PC-9 (cell line): ENCODE measurements at regions of chr10 and their contacts with region 1.

Region 1: DNA sequence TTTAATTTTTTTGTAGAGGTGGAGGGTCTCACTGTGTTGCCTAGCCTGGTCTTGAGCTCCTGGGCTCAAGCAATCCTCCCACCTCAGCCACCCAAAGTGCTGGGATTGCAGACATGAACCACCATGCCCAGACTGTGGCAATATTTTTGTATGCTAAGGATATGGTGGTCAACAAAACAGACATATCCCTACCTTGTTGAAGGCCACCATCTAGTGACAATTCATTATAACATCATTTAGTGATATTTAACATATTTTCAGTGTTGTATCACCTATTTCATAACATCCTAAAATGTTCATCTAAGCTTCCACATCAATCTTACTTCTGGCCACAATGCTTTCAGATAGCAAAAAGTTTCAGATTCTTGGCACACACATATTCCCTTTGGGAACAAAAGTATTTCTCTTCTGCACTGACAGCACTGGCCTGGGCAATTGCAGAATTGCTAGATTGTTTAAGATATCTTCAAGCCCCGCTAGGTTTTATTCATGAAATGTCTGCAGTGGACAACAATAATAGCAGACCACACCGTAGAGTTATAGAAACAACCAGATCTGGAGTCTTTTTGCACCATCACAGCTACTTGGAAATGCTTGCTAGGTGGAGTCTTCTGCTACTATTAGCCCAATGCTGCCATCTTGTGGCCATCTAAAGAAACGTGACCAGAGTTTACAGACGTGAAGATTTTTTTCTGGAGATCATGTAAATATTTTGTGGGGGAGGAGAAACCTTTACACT is 58.4 kb downstream of the DNAJC12 start:
- DNase-seq: peak; percentile 55 to 65
- H3K4me3 ChIP-seq: no peak overlapping the region
- H3K27ac ChIP-seq: no peak overlapping the region
- H3K4me1 ChIP-seq: no peaks in the 10 kb centered on the region
- H3K27me3 ChIP-seq: no peaks in the 10 kb centered on the region
- CTCF ChIP-seq: peak; percentile 92

Region 2: DNA sequence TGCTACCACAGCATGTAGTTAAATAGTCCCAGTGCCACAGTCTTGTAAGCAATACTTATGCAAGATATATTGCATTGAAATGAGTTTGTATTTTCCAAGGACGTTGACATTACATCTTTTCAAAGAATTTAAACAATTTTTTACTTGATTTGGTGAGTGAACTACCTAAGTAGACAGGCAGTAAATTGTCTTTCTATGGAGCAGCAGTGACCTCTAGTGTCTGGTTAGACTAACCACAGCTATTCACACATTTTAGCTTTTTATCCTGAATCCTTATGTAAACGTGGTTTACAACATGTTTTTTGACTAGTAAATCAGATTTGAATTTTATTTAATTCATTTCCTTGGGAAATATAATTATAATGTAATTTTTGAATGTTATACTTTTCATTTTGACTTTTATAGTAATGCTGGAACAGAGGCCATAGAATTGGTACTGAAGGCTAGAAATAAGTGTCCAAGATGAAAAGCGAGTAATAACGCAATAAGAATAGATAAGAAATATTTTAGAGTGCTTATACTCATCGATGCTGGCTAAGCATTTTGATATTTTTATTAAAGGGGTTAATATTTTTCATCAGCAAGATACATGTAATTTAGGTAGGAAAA is 848.2 kb before region 1 on chr10:
- CTCF ChIA-PET with region 1: interaction called, 3 read pairs
- POLR2A ChIA-PET with region 1: no interaction called
- intact Hi-C with region 1: loop called (anchors 2 kb)
- DNase-seq: no peak
- H3K4me3 ChIP-seq: no peak overlapping the region
- H3K27ac ChIP-seq: no peak overlapping the region
- H3K4me1 ChIP-seq: no peaks in the 10 kb centered on the region
- H3K27me3 ChIP-seq: no peaks in the 10 kb centered on the region; the same call in 1 of the 2 replicates
- CTCF ChIP-seq: peak; percentile 92

Region 3: DNA sequence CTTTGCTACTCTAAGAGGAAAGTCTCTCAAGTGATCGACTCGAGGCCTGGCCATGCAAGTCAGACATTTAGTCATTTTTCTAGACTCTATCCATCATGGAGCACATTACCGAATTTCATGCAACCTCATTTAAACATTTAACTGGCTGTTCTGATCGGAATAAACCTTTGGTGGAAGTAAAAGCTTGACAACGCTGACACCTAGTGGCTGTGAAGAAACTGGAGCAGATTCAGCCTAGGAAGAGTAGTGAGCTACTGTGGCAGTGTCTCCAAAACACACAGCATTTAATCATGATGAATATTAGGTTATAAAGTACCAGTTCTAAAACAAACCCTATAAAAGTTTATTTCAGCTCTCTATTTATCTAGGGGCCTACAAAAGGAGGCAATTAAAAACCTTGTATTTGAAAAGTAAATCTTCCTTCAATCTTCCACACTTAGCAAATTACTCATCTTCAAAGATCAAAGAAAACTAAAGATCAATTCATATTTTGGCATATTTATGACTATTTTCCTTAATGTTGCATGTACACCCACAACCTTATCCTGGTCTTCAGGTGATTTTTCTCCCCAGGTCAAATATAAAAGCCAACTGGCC is 258.6 kb before region 1 on chr10:
- CTCF ChIA-PET with region 1: no interaction called
- POLR2A ChIA-PET with region 1: no interaction called
- intact Hi-C with region 1: loop called (anchors 10 kb)
- DNase-seq: peak; percentile 31 to 42
- H3K4me3 ChIP-seq: no peak overlapping the region
- H3K27ac ChIP-seq: no peak overlapping the region
- H3K4me1 ChIP-seq: no peaks in the 10 kb centered on the region
- H3K27me3 ChIP-seq: no peaks in the 10 kb centered on the region
- CTCF ChIP-seq: peak; percentile 87

Region 4: DNA sequence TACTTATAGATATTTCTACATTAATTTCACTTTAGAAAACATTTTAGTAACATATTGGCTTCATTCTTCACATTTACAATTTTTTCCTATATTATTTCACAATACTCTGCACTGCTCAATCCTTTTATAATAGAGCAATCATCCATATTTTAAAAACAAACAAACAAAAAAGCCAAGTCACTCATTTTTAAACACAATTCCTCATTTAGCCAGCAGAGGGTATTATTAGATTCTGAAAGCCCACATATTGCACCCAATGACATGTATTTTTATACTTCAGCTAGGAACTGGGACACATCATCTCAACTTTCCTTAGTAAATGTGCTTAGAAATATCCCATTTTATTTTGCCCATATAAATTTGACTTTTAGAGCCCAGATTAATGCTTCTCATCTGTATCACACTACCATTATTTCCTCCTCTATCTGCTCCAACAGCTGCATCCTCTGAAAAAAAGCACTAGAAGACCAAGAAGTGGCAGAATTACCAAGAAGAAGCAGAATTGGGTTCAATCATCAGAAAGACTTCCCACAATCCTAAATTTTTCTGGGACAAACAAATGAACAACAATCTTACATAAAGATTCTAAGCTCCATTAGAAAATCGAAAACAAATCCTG is 113.1 kb before region 1 on chr10:
- CTCF ChIA-PET with region 1: interaction called, 3 read pairs
- POLR2A ChIA-PET with region 1: no interaction called
- intact Hi-C with region 1: loop called (anchors 1 kb)
- DNase-seq: no peak
- H3K4me3 ChIP-seq: no peak overlapping the region
- H3K27ac ChIP-seq: no peak overlapping the region
- H3K4me1 ChIP-seq: no peaks in the 10 kb centered on the region
- H3K27me3 ChIP-seq: no peaks in the 10 kb centered on the region
- CTCF ChIP-seq: peak; percentile 74

Region 5: GRCh38 chr10:67849331-67850011 is 69.8 kb after region 1 on chr10:
- CTCF ChIA-PET with region 1: interaction called, 10 read pairs
- POLR2A ChIA-PET with region 1: no interaction called
- intact Hi-C with region 1: no loop called
- DNase-seq: peak; percentile 81 to 90
- H3K4me3 ChIP-seq: peak overlapping the region; percentile 79
- H3K27ac ChIP-seq: peak overlapping the region; percentile 88
- H3K4me1 ChIP-seq: peaks cover 5% of the 10 kb centered on the region
- H3K27me3 ChIP-seq: no peaks in the 10 kb centered on the region
- CTCF ChIP-seq: no peak